ENCODE measurements at regions of chrX and their contacts with region 1.

Region 1: GRCh38 chrX:10310511-10310910 is 153.7 kb downstream of the CLCN4 start:
- DNase-seq: no peak
- H3K4me3 Mint-ChIP-seq: no peak overlapping the region
- H3K27ac Mint-ChIP-seq: peak overlapping the region; percentile 26
- H3K4me1 Mint-ChIP-seq: peaks cover 25% of the 10 kb centered on the region
- H3K27me3 Mint-ChIP-seq: no peaks in the 10 kb centered on the region
- CTCF ChIP-seq: no peak

Region 2: GRCh38 chrX:10377427-10377826 is 66.9 kb after region 1 on chrX:
- CTCF ChIA-PET with region 1: no interaction called
- intact Hi-C with region 1: loop called (anchors 2 kb)
- DNase-seq: no peak
- H3K4me3 Mint-ChIP-seq: no peak overlapping the region
- H3K27ac Mint-ChIP-seq: no peak overlapping the region
- H3K4me1 Mint-ChIP-seq: peaks cover 10% of the 10 kb centered on the region
- H3K27me3 Mint-ChIP-seq: no peaks in the 10 kb centered on the region
- CTCF ChIP-seq: no peak

Measured in Calu3 (cell line).